Spleen (tissue), 13 donors: ENCODE measurements at regions of chr5 and their contacts with region 1.

Region 1: DNA sequence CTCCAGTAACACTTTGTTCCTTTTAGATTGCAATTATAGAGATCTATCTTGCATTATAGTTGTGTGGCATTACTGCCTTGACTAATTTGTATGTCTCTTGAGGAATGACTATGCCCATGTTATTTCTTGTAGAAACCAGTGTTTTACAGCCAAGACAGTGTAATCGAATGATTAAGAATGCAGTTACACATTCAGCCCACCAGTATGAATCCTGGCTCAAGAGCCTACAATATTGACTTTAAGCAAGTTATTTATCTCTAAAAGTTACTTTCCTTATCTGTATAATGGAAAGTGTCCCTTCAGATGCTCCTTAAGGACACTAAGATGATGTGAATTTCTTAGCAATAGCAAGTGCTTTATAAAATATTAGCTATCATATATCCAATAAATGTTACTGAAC is 9.7 kb upstream of the SNX24 start:
- DNase-seq: no peak
- H3K4me3 ChIP-seq: no peak overlapping the region
- H3K27ac ChIP-seq: no peak overlapping the region
- H3K4me1 ChIP-seq: no peaks in the 10 kb centered on the region
- H3K27me3 ChIP-seq: no peaks in the 10 kb centered on the region
- CTCF ChIP-seq: no peak
- POLR2A ChIP-seq: no peak

Region 2: DNA sequence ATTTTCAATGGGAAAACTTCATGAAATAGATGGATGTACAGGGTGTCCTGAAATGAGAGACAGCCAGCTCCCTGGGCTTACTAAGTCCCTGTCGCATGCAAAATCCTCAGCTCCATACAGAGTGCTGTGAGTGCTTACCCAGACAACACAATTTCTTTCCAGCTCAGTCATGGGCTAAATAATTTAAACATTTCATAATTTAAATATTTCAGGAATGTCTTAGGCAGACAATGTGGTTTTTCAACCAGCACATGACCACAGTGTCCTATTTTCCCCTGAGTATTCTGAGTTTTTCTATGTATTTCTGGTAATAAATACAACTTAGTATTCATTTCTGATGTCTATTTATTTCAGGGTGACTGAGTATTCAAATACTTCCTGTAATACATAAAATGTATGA is 249.3 kb before region 1 on chr5:
- intact Hi-C with region 1: no loop called
- DNase-seq: no peak
- H3K4me3 ChIP-seq: no peak overlapping the region
- H3K27ac ChIP-seq: no peak overlapping the region
- H3K4me1 ChIP-seq: no peaks in the 10 kb centered on the region
- H3K27me3 ChIP-seq: peaks cover 0 to 6% (median 0%) of the 10 kb centered on the region in 7 donors
- CTCF ChIP-seq: no peak
- POLR2A ChIP-seq: no peak

Region 3: GRCh38 chr5:122805481-122805880 is 30.2 kb before region 1 on chr5:
- intact Hi-C with region 1: loop called (anchors 5 kb)
- DNase-seq: no peak
- H3K4me3 ChIP-seq: no peak overlapping the region
- H3K27ac ChIP-seq: no peak overlapping the region
- H3K4me1 ChIP-seq: no peaks in the 10 kb centered on the region
- H3K27me3 ChIP-seq: no peaks in the 10 kb centered on the region
- CTCF ChIP-seq: no peak
- POLR2A ChIP-seq: no peak

Region 4: DNA sequence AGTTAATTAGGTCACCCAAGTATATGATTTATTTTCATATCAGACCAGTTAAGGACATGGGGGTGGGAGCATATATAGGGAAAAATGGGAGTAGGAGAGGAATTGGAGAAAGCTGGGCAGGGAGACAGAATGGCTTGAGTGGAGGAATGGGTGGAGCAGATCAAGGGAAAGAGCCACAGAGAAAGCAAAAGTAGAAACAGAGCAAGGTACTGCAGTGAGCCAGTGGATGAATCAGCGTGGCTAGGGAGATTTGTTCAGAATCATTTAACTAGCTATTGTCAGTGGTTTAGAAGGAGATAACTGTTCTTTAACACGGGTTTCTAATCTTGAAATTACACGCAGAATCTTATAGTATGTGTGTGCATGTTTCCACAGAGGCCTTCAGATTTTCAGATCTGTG is 47.2 kb after region 1 on chr5:
- intact Hi-C with region 1: no loop called
- DNase-seq: no peak
- H3K4me3 ChIP-seq: no peak overlapping the region
- H3K27ac ChIP-seq: no peak overlapping the region
- H3K4me1 ChIP-seq: no peaks in the 10 kb centered on the region
- H3K27me3 ChIP-seq: no peaks in the 10 kb centered on the region
- CTCF ChIP-seq: no peak
- POLR2A ChIP-seq: no peak